Right ventricle myocardium inferior (tissue), 1 donor: ENCODE measurements at regions of chr2 and their contacts with region 1.

Region 1: GRCh38 chr2:210171309-210172203 is at the start of gene KANSL1L:
- DNase-seq: peak; percentile 99
- ATAC-seq: peak; percentile 95
- total RNA-seq, gene KANSL1L: 14.7 TPM

Region 2: GRCh38 chr2:210002158-210003157 is 169.1 kb before region 1 on chr2 and contains the start of gene RPE:
- intact Hi-C with region 1: loop called (anchors 1 kb)
- DNase-seq: peak; percentile 98
- ATAC-seq: peak; percentile 100
- total RNA-seq, gene RPE: 15.4 TPM

Region 3: DNA sequence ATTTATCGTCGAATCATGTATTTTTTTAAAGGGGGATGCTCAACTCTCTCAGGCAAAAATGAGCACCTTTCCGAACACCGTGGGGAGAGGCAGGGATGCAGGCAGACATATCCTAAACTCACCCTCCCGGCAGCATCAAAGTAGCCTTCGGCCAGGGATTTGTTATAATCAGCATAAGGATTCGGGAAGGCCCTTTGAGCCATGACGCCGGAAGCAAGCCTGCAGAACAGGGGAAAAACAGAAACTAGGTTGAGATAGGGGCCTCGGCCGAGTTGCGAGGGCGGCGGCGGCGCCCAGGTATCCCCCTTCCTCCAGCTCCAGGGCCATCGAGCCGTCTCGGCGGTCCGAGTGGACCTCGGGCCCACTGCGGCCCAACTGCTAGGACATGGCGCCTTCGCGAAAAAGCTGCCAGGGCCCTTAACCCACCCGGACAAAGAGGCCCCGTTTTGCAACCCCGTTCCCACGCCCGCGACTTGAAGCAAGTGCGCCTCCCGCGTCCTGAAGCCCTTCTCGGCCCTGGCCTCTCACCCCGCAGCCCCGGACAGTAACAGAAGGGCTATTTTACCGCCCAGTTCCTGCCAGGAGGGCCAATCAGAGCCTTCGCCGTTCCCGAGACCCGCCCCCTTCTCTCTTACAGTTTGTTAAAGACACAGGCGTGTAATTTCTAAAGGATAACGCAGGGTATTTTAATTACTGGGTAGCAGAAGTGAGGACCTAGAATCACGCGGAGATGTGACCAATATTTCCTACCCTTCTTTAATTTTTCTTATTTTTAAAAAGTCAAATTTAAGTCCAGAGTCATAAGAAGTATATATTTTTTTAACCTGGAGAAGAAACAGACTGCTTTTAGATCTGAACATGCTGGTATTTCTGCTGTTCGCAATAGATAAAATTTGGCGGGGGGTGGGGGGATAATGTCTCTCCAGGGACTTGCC is 304.9 kb after region 1 on chr2 and contains the start of gene LANCL1:
- intact Hi-C with region 1: loop called (anchors 10 kb)
- DNase-seq: peak; percentile 94
- ATAC-seq: peak; percentile 100
- total RNA-seq, gene LANCL1: 53.5 TPM

Region 4: DNA sequence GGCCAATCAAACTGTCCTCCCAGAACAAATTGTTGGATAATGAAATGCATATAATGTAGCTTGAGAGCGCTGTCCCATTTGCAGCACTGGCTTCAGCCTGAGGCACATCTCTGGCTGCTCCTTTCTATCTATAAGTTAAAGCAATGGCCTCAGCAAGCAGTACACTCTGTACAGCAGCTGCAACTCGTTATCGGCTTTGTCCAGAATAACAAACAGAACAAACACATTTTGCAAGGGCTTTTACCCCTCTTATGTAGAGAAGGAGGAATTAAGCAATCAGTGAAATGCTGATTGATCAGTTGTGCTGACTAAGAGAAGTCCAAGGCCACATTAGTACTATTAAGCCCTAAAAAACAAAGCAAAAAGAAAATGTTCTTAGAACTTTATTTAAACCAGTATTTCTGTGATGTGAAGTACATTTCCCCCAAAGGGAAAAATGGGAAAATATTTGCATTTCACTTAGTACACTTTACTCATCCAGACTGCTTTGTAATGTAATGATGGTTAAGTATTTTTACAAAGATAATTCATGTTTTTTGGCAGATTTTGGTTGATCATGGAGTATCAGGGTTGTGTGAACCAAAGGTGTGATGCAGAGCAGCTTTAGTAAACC is 369.8 kb after region 1 on chr2:
- intact Hi-C with region 1: no loop called
- DNase-seq: no peak
- ATAC-seq: no peak